Caco-2 (cell line): ENCODE measurements at regions of chr1 and their contacts with region 1.

Region 1: GRCh38 chr1:161192476-161193465 is 6.1 kb downstream of the ADAMTS4 start:
- DNase-seq: peak; percentile 71 to 76
- H3K4me3 ChIP-seq: no peak overlapping the region
- H3K4me3 Mint-ChIP-seq: no peak overlapping the region
- H3K27ac Mint-ChIP-seq: no peak overlapping the region
- H3K4me1 ChIP-seq: no peaks in the 10 kb centered on the region
- H3K4me1 Mint-ChIP-seq: peaks cover 6% of the 10 kb centered on the region
- H3K27me3 ChIP-seq: no peaks in the 10 kb centered on the region
- H3K27me3 Mint-ChIP-seq: no peaks in the 10 kb centered on the region
- CTCF ChIP-seq: peak; percentile 80 to 94

Region 2: DNA sequence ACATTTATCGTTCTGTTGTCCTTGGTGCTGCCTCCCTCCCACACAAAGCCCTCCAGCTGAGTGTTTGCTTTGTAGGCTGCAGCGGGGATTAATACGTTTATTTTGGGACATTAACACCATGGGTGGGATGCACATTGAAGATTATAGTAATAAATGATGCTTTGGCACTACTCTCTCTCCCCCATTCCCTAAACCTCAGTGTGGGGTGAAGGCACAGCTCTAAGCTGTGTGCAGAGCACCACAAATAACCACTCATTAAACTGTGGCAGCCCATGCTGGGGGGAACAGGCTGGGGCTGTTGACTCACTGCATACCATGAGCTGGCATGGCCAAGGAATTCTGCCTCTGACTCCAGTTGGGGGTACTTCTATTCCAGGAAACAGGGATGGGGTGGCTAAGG is 73.4 kb after region 1 on chr1:
- CTCF ChIA-PET with region 1: no interaction called
- POLR2A ChIA-PET with region 1: no interaction called
- intact Hi-C with region 1: no loop called
- DNase-seq: no peak
- H3K4me3 ChIP-seq: no peak overlapping the region
- H3K4me3 Mint-ChIP-seq: no peak overlapping the region
- H3K27ac Mint-ChIP-seq: peak overlapping the region; percentile 42
- H3K4me1 ChIP-seq: peaks cover 4% of the 10 kb centered on the region; the same call in 1 of the 2 replicates
- H3K4me1 Mint-ChIP-seq: peaks cover 6% of the 10 kb centered on the region
- H3K27me3 ChIP-seq: no peaks in the 10 kb centered on the region
- H3K27me3 Mint-ChIP-seq: no peaks in the 10 kb centered on the region
- CTCF ChIP-seq: no peak

Region 3: DNA sequence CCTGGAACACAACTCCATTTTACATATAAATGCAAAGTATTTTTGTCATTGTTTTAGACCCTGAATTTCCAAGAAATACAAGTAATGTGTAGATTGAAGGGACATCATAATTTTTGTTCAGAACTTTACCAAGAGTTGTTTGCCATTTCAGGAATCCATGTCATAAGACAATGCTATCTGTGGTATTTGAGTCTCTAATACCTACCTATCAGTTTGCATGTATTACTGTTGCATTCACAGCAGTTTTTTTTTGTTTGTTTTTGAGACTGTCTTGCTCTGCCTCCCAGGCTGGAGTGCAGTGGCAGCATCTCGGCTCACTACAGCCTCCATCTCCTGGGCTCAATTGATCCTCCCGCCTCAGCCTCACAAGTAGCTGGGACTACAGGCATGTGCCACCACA is 99.9 kb after region 1 on chr1:
- CTCF ChIA-PET with region 1: interaction called, 4 read pairs
- POLR2A ChIA-PET with region 1: no interaction called
- intact Hi-C with region 1: loop called (anchors 1 kb)
- DNase-seq: no peak
- H3K4me3 ChIP-seq: no peak overlapping the region
- H3K4me3 Mint-ChIP-seq: no peak overlapping the region
- H3K27ac Mint-ChIP-seq: no peak overlapping the region
- H3K4me1 ChIP-seq: peaks cover 14% of the 10 kb centered on the region
- H3K4me1 Mint-ChIP-seq: peaks cover 22% of the 10 kb centered on the region
- H3K27me3 ChIP-seq: no peaks in the 10 kb centered on the region
- H3K27me3 Mint-ChIP-seq: no peaks in the 10 kb centered on the region
- CTCF ChIP-seq: no peak

Region 4: GRCh38 chr1:161374373-161374772 is 181.6 kb after region 1 on chr1:
- CTCF ChIA-PET with region 1: interaction called, 4 read pairs
- POLR2A ChIA-PET with region 1: no interaction called
- intact Hi-C with region 1: loop called (anchors 1 kb)
- DNase-seq: peak in 1 of 2 experiments; percentile 14
- H3K4me3 ChIP-seq: no peak overlapping the region
- H3K4me3 Mint-ChIP-seq: no peak overlapping the region
- H3K27ac Mint-ChIP-seq: no peak overlapping the region
- H3K4me1 ChIP-seq: peaks cover 15% of the 10 kb centered on the region; the same call in 1 of the 2 replicates
- H3K4me1 Mint-ChIP-seq: no peaks in the 10 kb centered on the region
- H3K27me3 ChIP-seq: no peaks in the 10 kb centered on the region
- H3K27me3 Mint-ChIP-seq: no peaks in the 10 kb centered on the region
- CTCF ChIP-seq: peak; percentile 19 to 44

Region 5: GRCh38 chr1:161382214-161383019 is 189.6 kb after region 1 on chr1:
- CTCF ChIA-PET with region 1: interaction called, 12 read pairs
- POLR2A ChIA-PET with region 1: no interaction called
- intact Hi-C with region 1: loop called (anchors 1 kb)
- DNase-seq: peak in 1 of 2 experiments; percentile 45
- H3K4me3 ChIP-seq: no peak overlapping the region
- H3K4me3 Mint-ChIP-seq: no peak overlapping the region
- H3K27ac Mint-ChIP-seq: no peak overlapping the region
- H3K4me1 ChIP-seq: peaks cover 8% of the 10 kb centered on the region; the same call in 1 of the 2 replicates
- H3K4me1 Mint-ChIP-seq: no peaks in the 10 kb centered on the region
- H3K27me3 ChIP-seq: no peaks in the 10 kb centered on the region
- H3K27me3 Mint-ChIP-seq: no peaks in the 10 kb centered on the region
- CTCF ChIP-seq: peak; percentile 43 to 54

Region 6: GRCh38 chr1:163131981-163132380 is 1939.2 kb after region 1 on chr1:
- CTCF ChIA-PET with region 1: no interaction called
- POLR2A ChIA-PET with region 1: no interaction called
- intact Hi-C with region 1: no loop called
- DNase-seq: no peak
- H3K4me3 ChIP-seq: no peak overlapping the region
- H3K4me3 Mint-ChIP-seq: no peak overlapping the region
- H3K27ac Mint-ChIP-seq: no peak overlapping the region
- H3K4me1 ChIP-seq: no peaks in the 10 kb centered on the region
- H3K4me1 Mint-ChIP-seq: no peaks in the 10 kb centered on the region
- H3K27me3 ChIP-seq: no peaks in the 10 kb centered on the region
- H3K27me3 Mint-ChIP-seq: peaks cover 3% of the 10 kb centered on the region
- CTCF ChIP-seq: no peak